ENCODE measurements at regions of chr5 and their contacts with region 1.

Region 1: DNA sequence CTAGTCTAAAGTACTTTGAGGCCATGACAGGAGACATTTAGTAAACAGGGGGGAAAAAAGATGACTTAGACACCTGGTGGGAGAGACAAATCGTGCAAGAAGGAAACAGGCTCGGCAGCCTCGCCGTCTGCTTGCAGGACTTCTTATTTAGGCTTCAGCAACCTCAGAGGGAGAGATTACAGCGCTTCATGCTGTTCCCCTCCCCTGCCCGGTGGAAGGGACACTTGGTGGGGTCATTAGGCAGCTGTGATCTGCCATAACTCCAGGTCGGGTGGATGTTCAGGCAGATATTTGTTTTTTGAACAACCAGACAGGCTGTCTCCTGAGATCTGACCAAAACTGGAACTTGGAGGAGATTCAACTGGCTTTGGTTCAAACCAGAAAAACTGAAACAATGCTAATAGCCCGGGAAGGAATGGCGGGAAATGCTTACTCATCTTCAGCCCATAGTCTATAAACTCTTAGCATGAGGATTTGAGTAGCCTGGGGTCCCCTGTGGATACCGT is 38.1 kb upstream of the CD180 start:
- DNase-seq: peak in 1 of 2 donors; percentile 75
- H3K4me3 ChIP-seq: peak overlapping the region in 1 of 4 donors; percentile 30
- H3K27ac ChIP-seq: peak overlapping the region; percentile 53 to 77 (median 73)
- H3K4me1 ChIP-seq: peaks cover 20 to 27% (median 21%) of the 10 kb centered on the region in 4 donors
- H3K27me3 ChIP-seq: no peaks in the 10 kb centered on the region
- CTCF ChIP-seq: no peak
- EP300 ChIP-seq: no peak
- POLR2A ChIP-seq: no peak

Region 2: DNA sequence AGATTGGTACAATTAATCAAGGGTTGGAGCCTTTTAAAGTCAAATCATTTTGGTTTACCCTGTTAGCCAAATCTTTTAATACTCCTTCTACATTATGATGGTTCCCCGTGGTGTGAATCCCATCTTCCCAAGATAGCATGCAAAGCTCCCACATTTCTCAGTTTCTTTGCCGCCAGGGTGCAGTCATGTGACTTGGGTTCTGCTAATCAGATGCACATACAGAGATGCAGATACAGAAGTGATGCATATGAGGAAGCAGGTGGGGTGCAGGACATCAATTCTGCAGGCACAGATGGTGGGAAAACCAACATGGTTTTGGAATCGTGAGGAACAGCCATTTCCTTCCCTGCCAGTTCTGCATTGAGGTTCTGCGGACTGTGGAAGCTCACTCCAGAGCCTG is 647.0 kb before region 1 on chr5:
- intact Hi-C with region 1: no loop called
- DNase-seq: no peak
- H3K4me3 ChIP-seq: no peak overlapping the region
- H3K27ac ChIP-seq: no peak overlapping the region
- H3K4me1 ChIP-seq: no peaks in the 10 kb centered on the region
- H3K27me3 ChIP-seq: peaks cover 0 to 30% (median 0%) of the 10 kb centered on the region in 3 donors
- CTCF ChIP-seq: no peak
- EP300 ChIP-seq: no peak
- POLR2A ChIP-seq: no peak

Region 3: GRCh38 chr5:67289763-67290521 is 55.2 kb after region 1 on chr5:
- intact Hi-C with region 1: no loop called
- DNase-seq: peak in 1 of 2 donors; percentile 49
- H3K4me3 ChIP-seq: no peak overlapping the region
- H3K27ac ChIP-seq: peak overlapping the region in 3 of 5 donors; percentile 8 to 42 (median 16)
- H3K4me1 ChIP-seq: peaks cover 0 to 38% (median 7%) of the 10 kb centered on the region in 4 donors
- H3K27me3 ChIP-seq: no peaks in the 10 kb centered on the region
- CTCF ChIP-seq: no peak
- EP300 ChIP-seq: no peak
- POLR2A ChIP-seq: no peak

Region 4: GRCh38 chr5:67581203-67581602 is 346.5 kb after region 1 on chr5:
- intact Hi-C with region 1: no loop called
- DNase-seq: no peak
- H3K4me3 ChIP-seq: no peak overlapping the region
- H3K27ac ChIP-seq: no peak overlapping the region
- H3K4me1 ChIP-seq: peaks cover 0 to 11% (median 3%) of the 10 kb centered on the region in 4 donors
- H3K27me3 ChIP-seq: no peaks in the 10 kb centered on the region
- CTCF ChIP-seq: no peak
- EP300 ChIP-seq: no peak
- POLR2A ChIP-seq: no peak

Region 5: DNA sequence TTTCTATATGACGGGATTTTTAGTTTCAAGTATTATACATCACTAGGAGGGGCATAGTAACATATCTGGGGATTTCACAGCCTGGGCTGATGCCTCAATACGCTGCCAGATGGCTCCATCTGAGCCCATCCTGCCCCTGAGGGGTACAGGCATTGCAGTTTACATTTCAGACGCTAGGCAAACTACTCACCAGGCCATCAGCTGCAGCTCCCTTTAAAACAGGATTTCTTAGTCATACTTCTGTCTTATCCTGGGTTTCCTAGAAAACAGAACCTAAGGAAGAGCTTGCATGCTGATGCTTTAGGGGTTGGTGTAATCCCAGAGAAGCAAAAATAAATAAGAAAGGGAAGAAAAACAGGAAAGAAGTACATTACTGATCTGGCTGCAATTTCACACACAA is 608.1 kb after region 1 on chr5:
- intact Hi-C with region 1: no loop called
- DNase-seq: peak in 1 of 2 donors; percentile 7
- H3K4me3 ChIP-seq: no peak overlapping the region
- H3K27ac ChIP-seq: no peak overlapping the region
- H3K4me1 ChIP-seq: no peaks in the 10 kb centered on the region
- H3K27me3 ChIP-seq: no peaks in the 10 kb centered on the region
- CTCF ChIP-seq: no peak
- EP300 ChIP-seq: no peak
- POLR2A ChIP-seq: no peak

Region 6: DNA sequence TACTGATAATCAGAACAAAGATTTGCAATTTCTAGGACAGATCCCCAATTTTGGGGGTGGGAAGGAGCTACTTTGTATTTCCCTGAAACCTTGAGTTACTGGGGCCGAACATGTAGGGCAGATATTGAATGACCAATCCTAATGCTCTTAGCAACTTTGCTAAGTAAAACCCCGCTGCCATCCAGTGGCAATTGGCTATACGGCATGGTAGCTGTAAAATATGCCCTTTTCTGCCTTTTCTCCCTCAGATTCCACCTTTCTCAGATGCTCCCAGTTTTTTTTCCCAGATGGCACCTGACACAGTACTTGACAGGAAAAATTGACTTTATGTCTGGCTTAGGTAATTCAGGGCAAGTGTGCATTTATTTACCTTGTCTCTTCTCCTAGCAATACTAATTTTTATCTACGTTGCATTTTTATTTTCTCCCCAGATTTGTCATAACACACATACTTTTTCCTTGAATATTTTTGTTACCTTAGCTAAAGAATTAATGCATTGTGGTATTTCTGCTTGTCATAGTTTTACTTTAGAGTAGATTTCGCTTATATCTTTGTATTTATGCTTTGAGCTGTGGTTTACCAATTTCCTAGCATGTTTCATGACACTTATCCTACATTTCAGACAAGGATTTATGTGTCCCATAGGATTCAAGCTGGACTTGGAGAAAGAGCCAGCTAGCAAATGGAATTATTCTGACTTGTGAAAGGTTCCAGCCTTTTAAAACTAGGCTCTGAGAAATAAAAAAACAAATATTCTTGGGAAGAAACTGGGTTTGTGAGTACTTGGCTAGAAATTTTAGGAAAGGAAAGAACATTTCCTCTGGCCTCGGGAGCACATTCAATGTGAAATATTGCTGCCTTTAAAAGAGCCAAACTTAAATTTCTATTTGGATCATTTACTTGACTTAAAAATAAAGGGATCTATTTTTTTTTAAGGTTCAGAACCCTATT is 1018.2 kb after region 1 on chr5:
- intact Hi-C with region 1: loop called (anchors 10 kb)
- DNase-seq: peak; percentile 53 to 86
- H3K4me3 ChIP-seq: peak overlapping the region in 1 of 4 donors; percentile 4
- H3K27ac ChIP-seq: peak overlapping the region in 4 of 5 donors; percentile 39 to 75 (median 65)
- H3K4me1 ChIP-seq: peaks cover 49 to 100% (median 76%) of the 10 kb centered on the region in 4 donors
- H3K27me3 ChIP-seq: no peaks in the 10 kb centered on the region
- CTCF ChIP-seq: peak in 5 of 7 experiments; percentile 51 to 71 (median 66)
- EP300 ChIP-seq: no peak
- POLR2A ChIP-seq: no peak

Measured in stomach (tissue), 19 donors.